ENCODE measurements at regions of chr10 and their contacts with region 1.

Region 1: GRCh38 chr10:29057712-29058335 is 231.0 kb upstream of the LYZL1 start:
- DNase-seq: no peak
- ATAC-seq: no peak
- H3K4me3 ChIP-seq: no peak overlapping the region
- H3K27ac ChIP-seq: no peak overlapping the region
- H3K4me1 ChIP-seq: no peaks in the 10 kb centered on the region
- H3K27me3 ChIP-seq: no peaks in the 10 kb centered on the region
- CTCF ChIP-seq: no peak
- EP300 ChIP-seq: no peak
- POLR2A ChIP-seq: no peak
- RAD21 ChIP-seq: no peak

Region 2: GRCh38 chr10:28925121-28925698 is 132.6 kb before region 1 on chr10:
- CTCF ChIA-PET with region 1: no interaction called
- POLR2A ChIA-PET with region 1: interaction called, 13 read pairs
- RAD21 ChIA-PET with region 1: no interaction called
- SMC1A ChIA-PET with region 1: no interaction called
- in situ Hi-C with region 1: no loop called
- intact Hi-C with region 1: no loop called
- DNase-seq: no peak
- ATAC-seq: no peak
- H3K4me3 ChIP-seq: no peak overlapping the region
- H3K27ac ChIP-seq: no peak overlapping the region
- H3K4me1 ChIP-seq: no peaks in the 10 kb centered on the region
- H3K27me3 ChIP-seq: no peaks in the 10 kb centered on the region
- CTCF ChIP-seq: no peak
- EP300 ChIP-seq: no peak
- POLR2A ChIP-seq: no peak
- RAD21 ChIP-seq: no peak

Region 3: GRCh38 chr10:29022473-29022872 is 35.4 kb before region 1 on chr10:
- CTCF ChIA-PET with region 1: no interaction called
- POLR2A ChIA-PET with region 1: no interaction called
- RAD21 ChIA-PET with region 1: no interaction called
- SMC1A ChIA-PET with region 1: no interaction called
- in situ Hi-C with region 1: no loop called
- intact Hi-C with region 1: no loop called
- DNase-seq: no peak
- ATAC-seq: no peak
- H3K4me3 ChIP-seq: no peak overlapping the region
- H3K27ac ChIP-seq: no peak overlapping the region
- H3K4me1 ChIP-seq: no peaks in the 10 kb centered on the region
- H3K27me3 ChIP-seq: no peaks in the 10 kb centered on the region
- CTCF ChIP-seq: no peak
- EP300 ChIP-seq: no peak
- POLR2A ChIP-seq: no peak
- RAD21 ChIP-seq: no peak